ENCODE measurements at regions of chr4 and their contacts with region 1.

Region 1: DNA sequence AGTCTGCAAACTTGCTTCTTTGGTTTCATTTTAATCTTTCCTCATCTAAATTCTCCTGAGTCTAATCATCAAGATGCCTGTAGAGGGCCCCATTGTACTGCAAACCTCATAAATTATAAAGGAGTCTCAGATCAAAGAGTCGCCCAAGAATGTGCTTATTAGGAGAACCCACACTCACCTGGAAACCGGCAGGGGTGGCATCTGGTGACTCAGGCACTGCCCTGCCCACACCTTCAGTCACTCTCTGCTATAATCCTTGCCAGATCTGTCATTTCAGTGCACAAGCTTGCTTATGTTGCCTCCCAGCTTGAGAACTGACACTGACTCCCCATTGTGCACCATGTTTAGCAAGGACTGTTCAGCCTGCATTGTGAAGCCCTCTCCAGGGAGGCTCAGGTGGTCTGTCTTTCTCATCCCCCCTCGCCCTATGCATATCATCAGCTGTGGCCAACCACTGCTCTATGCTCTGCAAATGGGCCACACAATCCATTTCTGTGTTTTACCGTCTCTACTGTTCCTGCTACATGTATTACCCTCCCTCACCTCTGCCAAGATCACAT is 12.4 kb downstream of the EPGN start:
- DNase-seq: peak; percentile 27 to 64
- H3K4me3 ChIP-seq: peak overlapping the region in 1 of 4 experiments; percentile 2; a peak in 1 of 8 replicates
- H3K27ac ChIP-seq: no peak overlapping the region
- H3K4me1 ChIP-seq: peaks cover 0 to 7% (median under 1%) of the 10 kb centered on the region in 4 experiments; a peak in 2 of 7 replicates
- H3K27me3 ChIP-seq: no peaks in the 10 kb centered on the region
- CTCF ChIP-seq: peak in 2 of 3 experiments; percentile 45 to 48; a peak in 2 of 4 replicates
- EP300 ChIP-seq: no peak
- POLR2A ChIP-seq: no peak
- RAD21 ChIP-seq: peak; percentile 80 to 82

Region 2: GRCh38 chr4:74335341-74336021 is 14.8 kb after region 1 on chr4:
- CTCF ChIA-PET with region 1: interaction called, 10 read pairs
- POLR2A ChIA-PET with region 1: no interaction called
- DNase-seq: no peak
- H3K4me3 ChIP-seq: no peak overlapping the region
- H3K27ac ChIP-seq: no peak overlapping the region
- H3K4me1 ChIP-seq: peaks cover 0 to 4% (median 0%) of the 10 kb centered on the region in 4 experiments; a peak in 2 of 7 replicates
- H3K27me3 ChIP-seq: no peaks in the 10 kb centered on the region
- CTCF ChIP-seq: no peak
- EP300 ChIP-seq: no peak
- POLR2A ChIP-seq: no peak
- RAD21 ChIP-seq: no peak

Region 3: DNA sequence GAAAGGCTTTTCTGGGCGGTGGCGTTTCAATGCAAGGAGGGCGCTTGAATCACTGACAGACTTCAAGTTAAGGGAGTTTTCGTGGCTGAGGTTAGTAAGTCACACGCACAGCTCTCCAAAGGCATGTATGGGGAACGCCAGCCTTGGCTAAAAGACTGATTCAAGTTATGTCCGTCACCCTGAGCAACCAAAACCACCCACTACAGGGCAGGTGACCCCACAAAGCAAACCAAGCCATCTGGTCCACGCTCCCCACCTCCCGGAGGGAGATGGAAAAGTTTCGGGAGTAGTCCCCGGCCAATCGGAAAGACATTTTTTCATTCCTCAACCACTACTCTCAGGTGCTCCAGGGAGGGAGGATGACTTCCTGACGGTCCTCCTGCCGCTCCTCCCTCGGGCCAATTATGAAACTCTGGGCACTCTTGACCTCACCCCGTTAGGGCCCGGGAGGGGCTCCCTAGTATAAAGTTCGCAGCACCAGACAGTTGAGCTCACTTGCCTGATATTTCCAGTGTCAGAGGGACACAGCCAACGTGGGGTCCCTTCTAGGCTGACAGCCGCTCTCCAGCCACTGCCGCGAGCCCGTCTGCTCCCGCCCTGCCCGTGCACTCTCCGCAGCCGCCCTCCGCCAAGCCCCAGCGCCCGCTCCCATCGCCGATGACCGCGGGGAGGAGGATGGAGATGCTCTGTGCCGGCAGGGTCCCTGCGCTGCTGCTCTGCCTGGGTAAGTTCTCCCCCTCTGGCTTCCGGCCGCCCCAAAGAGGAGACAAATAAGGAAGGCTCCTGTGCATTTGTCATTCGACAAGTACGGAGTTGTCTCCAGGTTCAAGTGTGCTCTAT is 44.2 kb after region 1 on chr4 and contains the start of gene EREG:
- CTCF ChIA-PET with region 1: interaction called, 11 read pairs
- POLR2A ChIA-PET with region 1: no interaction called
- DNase-seq: peak; percentile 50 to 84
- H3K4me3 ChIP-seq: peak within 1 kb of the TSS; percentile 54 to 86 (median 72)
- H3K27ac ChIP-seq: no peak within 1 kb of the TSS
- H3K4me1 ChIP-seq: peaks cover 0 to 7% (median 1%) of the 10 kb centered on the region in 4 experiments; a peak in 3 of 7 replicates
- H3K27me3 ChIP-seq: peaks cover 0 to 12% (median 6%) of the 10 kb centered on the region in 4 experiments; a peak in 4 of 7 replicates
- CTCF ChIP-seq: peak in 1 of 3 experiments; percentile 2; a peak in 1 of 4 replicates
- EP300 ChIP-seq: no peak
- POLR2A ChIP-seq: no peak
- RAD21 ChIP-seq: no peak
- total RNA-seq, gene EREG: not detected in 2 replicates

Region 4: GRCh38 chr4:74503580-74503979 is 182.9 kb after region 1 on chr4:
- CTCF ChIA-PET with region 1: no interaction called
- POLR2A ChIA-PET with region 1: no interaction called
- DNase-seq: no peak
- H3K4me3 ChIP-seq: no peak overlapping the region
- H3K27ac ChIP-seq: no peak overlapping the region
- H3K4me1 ChIP-seq: no peaks in the 10 kb centered on the region
- H3K27me3 ChIP-seq: no peaks in the 10 kb centered on the region
- CTCF ChIP-seq: no peak
- EP300 ChIP-seq: no peak
- POLR2A ChIP-seq: no peak
- RAD21 ChIP-seq: no peak